B cell (primary cell): ENCODE measurements at regions of chr3 and their contacts with region 1.

Region 1: GRCh38 chr3:194315088-194315964 is 35.8 kb downstream of the CPN2 start:
- DNase-seq: peak; percentile 92
- ATAC-seq: peak; percentile 85
- H3K4me3 ChIP-seq: peak overlapping the region; percentile 17 to 72 (median 50)
- H3K4me3 Mint-ChIP-seq: peak overlapping the region; percentile 80
- H3K27ac ChIP-seq: no peak overlapping the region
- H3K27ac Mint-ChIP-seq: peak overlapping the region; percentile 37
- H3K4me1 ChIP-seq: peaks cover 24 to 25% of the 10 kb centered on the region in 2 donors
- H3K4me1 Mint-ChIP-seq: peaks cover 28% of the 10 kb centered on the region
- H3K27me3 ChIP-seq: peaks cover 0 to 74% (median 30%) of the 10 kb centered on the region in 4 experiments
- H3K27me3 Mint-ChIP-seq: peaks cover 57% of the 10 kb centered on the region
- CTCF ChIP-seq: peak; percentile 98

Region 2: DNA sequence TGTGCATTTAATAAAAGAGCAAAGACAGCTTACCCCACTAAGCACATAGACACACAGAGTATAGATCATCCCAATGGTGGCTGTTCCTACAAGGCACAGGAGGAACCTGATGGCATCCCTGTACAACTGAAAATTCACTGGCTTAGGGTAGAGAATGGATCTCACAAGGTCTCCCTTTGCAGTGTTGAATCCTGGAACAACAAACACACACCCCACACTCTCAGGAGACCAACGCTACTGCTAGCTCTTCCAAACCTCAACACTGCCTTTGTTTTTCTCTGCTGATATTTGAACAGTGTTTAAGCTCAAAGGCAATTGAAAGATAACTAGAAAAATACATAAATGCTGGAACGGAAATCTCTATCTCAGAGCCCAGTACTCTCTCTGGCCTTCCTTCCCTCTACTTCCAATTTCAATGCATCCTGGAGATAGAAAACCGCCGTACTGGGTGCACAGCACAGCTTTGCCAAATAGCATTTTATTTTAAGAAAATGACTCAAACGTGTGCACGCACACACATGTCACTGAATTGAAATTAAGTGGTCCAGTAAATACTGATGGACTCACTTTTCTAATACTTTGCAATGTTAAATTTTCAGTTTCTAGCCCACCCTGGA is 849.2 kb before region 1 on chr3:
- CTCF ChIA-PET with region 1: interaction called, 3 read pairs
- POLR2A ChIA-PET with region 1: no interaction called
- intact Hi-C with region 1: loop called (anchors 5 kb)
- DNase-seq: no peak
- ATAC-seq: no peak
- H3K4me3 ChIP-seq: no peak overlapping the region
- H3K4me3 Mint-ChIP-seq: no peak overlapping the region
- H3K27ac ChIP-seq: no peak overlapping the region
- H3K27ac Mint-ChIP-seq: no peak overlapping the region
- H3K4me1 ChIP-seq: no peaks in the 10 kb centered on the region
- H3K4me1 Mint-ChIP-seq: peaks cover 2% of the 10 kb centered on the region
- H3K27me3 ChIP-seq: no peaks in the 10 kb centered on the region
- H3K27me3 Mint-ChIP-seq: no peaks in the 10 kb centered on the region
- CTCF ChIP-seq: no peak

Region 3: DNA sequence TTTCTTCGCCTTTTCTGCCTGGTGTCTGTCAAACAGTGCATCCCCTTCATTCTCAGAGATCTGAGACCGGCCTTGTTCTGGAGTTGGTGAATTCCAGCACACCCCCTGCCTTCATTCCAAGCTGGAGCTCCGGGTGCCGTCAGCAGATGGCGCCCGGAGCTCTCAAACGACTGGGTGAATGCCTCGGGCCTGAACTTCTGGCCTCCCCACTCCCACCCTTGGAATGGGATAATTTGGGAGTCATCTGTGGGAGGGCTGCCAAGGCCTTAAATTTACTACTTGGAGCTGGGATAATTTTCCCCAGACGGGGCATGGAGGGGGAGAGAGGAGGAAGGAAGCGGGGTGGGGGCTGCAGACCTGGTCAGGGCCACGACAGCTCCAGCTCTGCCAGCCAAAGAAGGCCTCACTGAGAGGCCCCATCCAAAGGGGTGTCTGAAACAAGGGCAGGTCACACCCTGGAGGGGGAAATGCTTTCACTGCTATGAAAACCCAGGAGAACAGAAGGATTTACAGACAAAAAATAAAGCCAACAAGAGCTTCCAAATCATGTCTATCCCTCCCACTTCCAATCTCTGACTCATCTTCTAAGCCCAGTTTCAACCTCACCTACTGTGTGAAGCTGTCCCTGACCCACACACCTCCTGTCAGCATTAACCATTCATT is 534.4 kb before region 1 on chr3:
- CTCF ChIA-PET with region 1: interaction called, 157 read pairs
- POLR2A ChIA-PET with region 1: interaction called, 3 read pairs
- intact Hi-C with region 1: loop called (anchors 1 kb)
- DNase-seq: peak; percentile 63
- ATAC-seq: peak; percentile 45
- H3K4me3 ChIP-seq: no peak overlapping the region
- H3K4me3 Mint-ChIP-seq: no peak overlapping the region
- H3K27ac ChIP-seq: no peak overlapping the region
- H3K27ac Mint-ChIP-seq: no peak overlapping the region
- H3K4me1 ChIP-seq: peaks cover 12% of the 10 kb centered on the region in 2 donors
- H3K4me1 Mint-ChIP-seq: peaks cover 12% of the 10 kb centered on the region
- H3K27me3 ChIP-seq: peaks cover 0 to 61% (median 28%) of the 10 kb centered on the region in 4 experiments
- H3K27me3 Mint-ChIP-seq: peaks cover 59% of the 10 kb centered on the region
- CTCF ChIP-seq: peak; percentile 59

Region 4: DNA sequence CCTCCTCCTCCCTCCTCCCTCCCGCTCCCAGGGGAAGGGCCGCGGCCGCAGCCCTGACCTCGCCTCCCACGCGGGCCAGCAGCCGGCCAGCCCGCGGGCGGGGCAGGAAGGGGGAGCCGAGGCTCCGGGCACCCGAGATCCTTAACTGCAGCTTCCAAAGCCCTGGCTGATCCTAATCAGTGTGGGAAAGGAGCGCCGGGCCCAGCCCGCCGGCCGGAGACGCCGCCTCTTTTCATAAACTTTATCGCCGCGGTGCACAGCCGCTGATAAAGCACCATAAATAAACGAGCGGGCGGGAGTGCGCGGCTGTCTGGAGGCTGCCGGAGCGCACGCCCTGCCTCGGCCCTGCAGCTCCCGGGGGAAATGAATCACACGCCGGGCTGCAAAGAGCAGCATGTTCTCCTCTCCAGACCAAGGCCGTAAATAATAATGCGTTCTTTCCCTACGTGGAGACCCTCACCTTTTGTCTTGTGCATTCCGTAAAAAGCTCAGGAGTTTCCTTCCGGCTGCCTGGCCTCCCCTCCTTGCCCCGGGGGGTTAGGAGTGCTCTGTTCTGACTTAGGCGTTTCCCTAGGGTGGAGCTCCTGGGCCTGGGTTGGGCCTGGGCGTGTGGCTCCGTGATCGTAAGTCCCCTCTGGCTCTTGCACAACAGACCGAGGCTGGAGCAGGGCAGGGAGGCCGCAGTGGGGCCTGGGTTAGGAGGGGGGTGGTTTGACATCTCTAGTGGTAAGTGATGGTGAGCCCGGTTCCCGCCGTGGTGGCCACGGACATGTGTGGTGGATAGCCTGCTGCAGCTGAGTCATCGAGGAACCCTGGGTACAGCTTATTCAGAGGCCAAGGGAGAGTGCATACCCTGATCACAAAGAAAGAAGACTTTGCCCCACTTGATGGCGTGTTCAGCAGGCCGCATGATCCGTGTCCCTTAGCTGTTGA is 311.9 kb before region 1 on chr3:
- CTCF ChIA-PET with region 1: interaction called, 11 read pairs
- POLR2A ChIA-PET with region 1: no interaction called
- intact Hi-C with region 1: no loop called
- DNase-seq: peak; percentile 69
- ATAC-seq: peak; percentile 93
- H3K4me3 ChIP-seq: peak overlapping the region in 4 of 5 experiments; percentile 31 to 76 (median 56)
- H3K4me3 Mint-ChIP-seq: peak overlapping the region; percentile 85
- H3K27ac ChIP-seq: peak overlapping the region in 1 of 2 donors; percentile 22
- H3K27ac Mint-ChIP-seq: peak overlapping the region; percentile 61
- H3K4me1 ChIP-seq: peaks cover 32 to 38% of the 10 kb centered on the region in 2 donors
- H3K4me1 Mint-ChIP-seq: peaks cover 33% of the 10 kb centered on the region
- H3K27me3 ChIP-seq: peaks cover 0 to 18% (median 0%) of the 10 kb centered on the region in 4 experiments
- H3K27me3 Mint-ChIP-seq: peaks cover 13% of the 10 kb centered on the region
- CTCF ChIP-seq: no peak

Region 5: DNA sequence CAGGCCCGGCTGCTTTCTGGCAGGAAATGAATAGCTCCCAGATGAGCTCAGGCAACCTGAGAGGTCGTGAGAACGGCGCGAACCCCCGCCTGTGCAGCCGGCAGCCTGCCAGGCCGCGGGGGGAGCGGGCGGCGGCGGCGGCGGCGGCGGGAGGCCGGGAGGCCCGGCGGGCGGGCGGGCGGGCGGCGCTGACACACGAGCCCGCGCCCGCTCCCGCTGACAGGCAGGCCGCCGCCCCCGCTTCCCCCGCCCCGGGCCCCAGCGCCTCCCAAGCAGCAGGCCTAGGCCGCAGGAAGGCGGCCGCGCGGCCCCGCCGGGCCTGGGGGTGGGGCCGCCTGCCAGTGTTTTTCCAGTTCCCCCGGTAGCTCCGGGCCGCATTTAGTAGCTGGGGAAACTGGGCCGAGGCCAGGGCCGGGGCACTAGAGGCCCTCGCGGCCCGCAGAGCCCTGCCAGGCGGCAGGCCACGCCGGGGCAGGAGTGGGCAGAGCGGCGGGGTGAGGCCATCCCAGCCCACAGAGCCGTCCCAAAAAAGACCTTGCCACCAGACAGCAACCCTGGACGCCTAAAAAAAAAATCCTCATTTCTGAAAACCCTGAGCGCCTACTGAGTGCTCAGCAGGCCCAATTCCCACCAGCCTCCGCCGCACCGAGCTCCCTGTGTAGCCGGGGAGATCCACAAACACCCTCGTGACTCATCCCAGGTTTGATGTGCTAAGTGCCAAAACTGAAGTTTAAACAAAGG is 173.7 kb before region 1 on chr3:
- CTCF ChIA-PET with region 1: interaction called, 124 read pairs
- POLR2A ChIA-PET with region 1: no interaction called
- intact Hi-C with region 1: loop called (anchors 1 kb)
- DNase-seq: peak; percentile 75
- ATAC-seq: peak; percentile 20
- H3K4me3 ChIP-seq: peak overlapping the region in 4 of 5 experiments; percentile 2 to 52 (median 52)
- H3K4me3 Mint-ChIP-seq: peak overlapping the region; percentile 75
- H3K27ac ChIP-seq: peak overlapping the region in 1 of 2 donors; percentile 27
- H3K27ac Mint-ChIP-seq: peak overlapping the region; percentile 27
- H3K4me1 ChIP-seq: peaks cover 34 to 44% of the 10 kb centered on the region in 2 donors
- H3K4me1 Mint-ChIP-seq: peaks cover 37% of the 10 kb centered on the region
- H3K27me3 ChIP-seq: peaks cover 0 to 20% (median 4%) of the 10 kb centered on the region in 4 experiments
- H3K27me3 Mint-ChIP-seq: peaks cover 5% of the 10 kb centered on the region
- CTCF ChIP-seq: no peak

Region 6: DNA sequence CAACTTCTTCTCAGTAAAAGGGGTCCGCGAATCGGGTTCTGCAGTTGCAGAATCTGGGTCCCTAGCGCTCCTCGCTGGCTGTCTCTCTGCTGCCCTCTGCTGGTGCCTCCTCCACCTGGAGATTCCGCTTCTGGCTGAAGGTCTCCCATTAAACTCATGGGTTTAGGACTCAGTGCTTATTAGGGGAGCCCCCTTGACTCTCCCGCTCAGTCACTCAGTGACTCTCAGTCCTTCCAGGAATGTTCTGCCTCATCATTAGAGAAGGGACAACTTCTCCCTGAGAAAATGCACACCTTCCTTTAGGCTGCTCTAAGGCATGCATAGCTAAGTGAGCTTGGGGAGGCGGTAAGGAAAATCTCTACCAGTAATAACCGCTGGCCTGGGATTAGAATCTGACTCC is 28.7 kb after region 1 on chr3:
- CTCF ChIA-PET with region 1: interaction called, 10 read pairs
- POLR2A ChIA-PET with region 1: no interaction called
- intact Hi-C with region 1: no loop called
- DNase-seq: peak; percentile 78
- ATAC-seq: peak; percentile 61
- H3K4me3 ChIP-seq: no peak overlapping the region
- H3K4me3 Mint-ChIP-seq: no peak overlapping the region
- H3K27ac ChIP-seq: no peak overlapping the region
- H3K27ac Mint-ChIP-seq: no peak overlapping the region
- H3K4me1 ChIP-seq: peaks cover 0 to 3% of the 10 kb centered on the region in 2 donors
- H3K4me1 Mint-ChIP-seq: peaks cover 8% of the 10 kb centered on the region
- H3K27me3 ChIP-seq: peaks cover 0 to 17% (median 0%) of the 10 kb centered on the region in 4 experiments
- H3K27me3 Mint-ChIP-seq: peaks cover 25% of the 10 kb centered on the region
- CTCF ChIP-seq: peak; percentile 98

Region 7: GRCh38 chr3:194472290-194472920 is 157.1 kb after region 1 on chr3:
- CTCF ChIA-PET with region 1: no interaction called
- POLR2A ChIA-PET with region 1: no interaction called
- intact Hi-C with region 1: no loop called
- DNase-seq: peak; percentile 71
- ATAC-seq: peak; percentile 90
- H3K4me3 ChIP-seq: no peak overlapping the region
- H3K4me3 Mint-ChIP-seq: no peak overlapping the region
- H3K27ac ChIP-seq: no peak overlapping the region
- H3K27ac Mint-ChIP-seq: no peak overlapping the region
- H3K4me1 ChIP-seq: no peaks in the 10 kb centered on the region
- H3K4me1 Mint-ChIP-seq: peaks cover 9% of the 10 kb centered on the region
- H3K27me3 ChIP-seq: no peaks in the 10 kb centered on the region
- H3K27me3 Mint-ChIP-seq: no peaks in the 10 kb centered on the region
- CTCF ChIP-seq: peak; percentile 99